ENCODE measurements at regions of chr16 and their contacts with region 1.

Region 1: DNA sequence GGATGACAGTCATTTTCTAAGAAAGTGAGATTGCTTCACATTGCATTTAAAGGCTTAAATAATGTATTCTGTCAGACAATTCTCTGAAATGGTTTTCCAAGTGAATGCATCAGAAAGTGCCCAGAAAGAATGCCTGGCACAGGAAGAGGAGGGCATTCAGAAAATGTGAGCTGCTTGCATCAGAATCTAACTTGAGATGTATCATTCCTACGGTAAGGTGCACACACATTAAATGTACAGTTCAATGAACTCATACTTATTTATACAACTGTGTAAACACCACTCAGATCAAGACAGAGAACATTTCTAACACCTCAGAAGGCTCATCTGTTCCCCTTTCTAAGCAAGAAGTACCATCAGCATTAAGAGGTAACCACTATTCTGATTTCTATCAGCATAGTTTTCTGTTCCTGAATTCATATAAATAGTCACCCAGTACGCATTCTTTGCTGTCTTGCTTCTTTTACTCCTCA is 638.0 kb downstream of the MAF start:
- DNase-seq: peak; percentile 63
- ATAC-seq: peak; percentile 67
- H3K4me3 ChIP-seq: peak overlapping the region in 1 of 5 experiments; percentile 11
- H3K4me3 Mint-ChIP-seq: peak overlapping the region; percentile 50
- H3K27ac ChIP-seq: peak overlapping the region in 1 of 2 donors; percentile 45
- H3K27ac Mint-ChIP-seq: peak overlapping the region; percentile 54
- H3K4me1 ChIP-seq: peaks cover 36 to 39% of the 10 kb centered on the region in 2 donors
- H3K4me1 Mint-ChIP-seq: peaks cover 46% of the 10 kb centered on the region
- H3K27me3 ChIP-seq: peaks cover 0 to 25% (median under 1%) of the 10 kb centered on the region in 4 experiments
- H3K27me3 Mint-ChIP-seq: peaks cover 9% of the 10 kb centered on the region
- CTCF ChIP-seq: no peak

Region 2: GRCh38 chr16:77722309-77723107 is 1240.0 kb before region 1 on chr16 and contains the start of gene NUDT7:
- CTCF ChIA-PET with region 1: no interaction called
- POLR2A ChIA-PET with region 1: no interaction called
- intact Hi-C with region 1: loop called (anchors 5 kb)
- DNase-seq: peak; percentile 96
- ATAC-seq: peak; percentile 97
- H3K4me3 ChIP-seq: peak within 1 kb of the TSS; percentile 49 to 90 (median 87)
- H3K4me3 Mint-ChIP-seq: peak within 1 kb of the TSS; percentile 85
- H3K27ac ChIP-seq: peak within 1 kb of the TSS; percentile 52 to 66
- H3K27ac Mint-ChIP-seq: peak within 1 kb of the TSS; percentile 77
- H3K4me1 ChIP-seq: peaks cover 10 to 15% of the 10 kb centered on the region in 2 donors
- H3K4me1 Mint-ChIP-seq: peaks cover 10% of the 10 kb centered on the region
- H3K27me3 ChIP-seq: no peaks in the 10 kb centered on the region
- H3K27me3 Mint-ChIP-seq: no peaks in the 10 kb centered on the region
- CTCF ChIP-seq: no peak
- total RNA-seq, gene NUDT7: 4.6 and 8.4 TPM in 2 replicates

Region 3: DNA sequence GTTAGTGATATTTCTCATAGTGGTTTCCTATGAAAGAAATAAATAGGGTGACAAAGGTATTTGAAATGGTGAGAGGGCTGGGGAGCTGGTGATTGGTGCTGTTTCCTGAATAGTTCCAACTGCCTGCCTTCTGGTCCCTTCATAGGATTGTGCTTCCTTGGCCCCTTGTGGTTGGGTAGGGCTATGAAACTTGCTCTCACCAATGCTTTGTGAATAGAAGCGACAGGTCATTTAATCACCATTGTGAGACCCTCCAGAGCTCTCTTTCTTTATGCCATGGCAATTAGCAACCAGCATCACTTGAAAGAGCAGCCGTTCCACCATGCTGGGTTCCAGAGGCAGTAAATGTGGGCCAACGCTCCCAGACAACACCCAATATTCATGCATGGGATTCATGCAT is 886.7 kb before region 1 on chr16:
- CTCF ChIA-PET with region 1: no interaction called
- POLR2A ChIA-PET with region 1: no interaction called
- intact Hi-C with region 1: no loop called
- DNase-seq: no peak
- ATAC-seq: no peak
- H3K4me3 ChIP-seq: no peak overlapping the region
- H3K4me3 Mint-ChIP-seq: no peak overlapping the region
- H3K27ac ChIP-seq: no peak overlapping the region
- H3K27ac Mint-ChIP-seq: no peak overlapping the region
- H3K4me1 ChIP-seq: no peaks in the 10 kb centered on the region
- H3K4me1 Mint-ChIP-seq: no peaks in the 10 kb centered on the region
- H3K27me3 ChIP-seq: peaks cover 0 to 5% (median 0%) of the 10 kb centered on the region in 4 experiments
- H3K27me3 Mint-ChIP-seq: peaks cover 37% of the 10 kb centered on the region
- CTCF ChIP-seq: no peak

Region 4: DNA sequence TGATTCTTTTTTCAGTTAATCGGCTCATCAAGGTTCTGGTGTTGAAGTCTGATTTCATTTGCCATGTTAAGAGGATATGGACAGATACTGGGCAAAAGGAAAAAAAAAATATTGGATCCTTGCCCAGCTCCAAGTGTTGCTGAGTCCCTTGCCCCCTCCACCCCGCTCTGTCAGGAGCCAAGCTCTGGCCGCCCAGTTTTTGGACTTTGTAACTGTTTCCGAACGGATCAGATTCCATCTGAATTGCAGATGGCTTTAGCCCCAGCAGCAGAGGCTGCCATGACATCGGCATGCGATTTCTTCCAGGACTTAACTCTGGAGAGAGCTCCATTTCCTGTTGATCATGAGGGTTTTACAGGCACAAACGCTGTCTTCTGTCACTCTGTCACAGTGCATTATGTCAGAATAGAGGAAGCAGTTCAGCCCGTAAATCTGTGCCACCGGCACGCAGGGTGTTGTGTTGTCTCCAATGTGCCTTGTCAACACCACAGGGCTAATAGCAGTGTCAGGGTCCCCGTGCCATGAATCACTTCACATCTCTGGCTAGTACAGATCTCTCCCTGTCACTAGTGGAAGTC is 22.5 kb after region 1 on chr16:
- CTCF ChIA-PET with region 1: interaction called, 3 read pairs
- POLR2A ChIA-PET with region 1: interaction called, 6 read pairs
- intact Hi-C with region 1: loop called (anchors 1 kb)
- DNase-seq: no peak
- ATAC-seq: no peak
- H3K4me3 ChIP-seq: no peak overlapping the region
- H3K4me3 Mint-ChIP-seq: no peak overlapping the region
- H3K27ac ChIP-seq: no peak overlapping the region
- H3K27ac Mint-ChIP-seq: no peak overlapping the region
- H3K4me1 ChIP-seq: peaks cover 8% of the 10 kb centered on the region in 2 donors
- H3K4me1 Mint-ChIP-seq: peaks cover 12% of the 10 kb centered on the region
- H3K27me3 ChIP-seq: peaks cover 0 to 4% (median 0%) of the 10 kb centered on the region in 4 experiments
- H3K27me3 Mint-ChIP-seq: no peaks in the 10 kb centered on the region
- CTCF ChIP-seq: no peak

Region 5: GRCh38 chr16:79012731-79013434 is 50.4 kb after region 1 on chr16:
- CTCF ChIA-PET with region 1: interaction called, 3 read pairs
- POLR2A ChIA-PET with region 1: no interaction called
- intact Hi-C with region 1: loop called (anchors 10 kb)
- DNase-seq: peak; percentile 51
- ATAC-seq: peak; percentile 88
- H3K4me3 ChIP-seq: peak overlapping the region in 1 of 5 experiments; percentile 17
- H3K4me3 Mint-ChIP-seq: peak overlapping the region; percentile 64
- H3K27ac ChIP-seq: no peak overlapping the region
- H3K27ac Mint-ChIP-seq: peak overlapping the region; percentile 50
- H3K4me1 ChIP-seq: peaks cover 18 to 23% of the 10 kb centered on the region in 2 donors
- H3K4me1 Mint-ChIP-seq: peaks cover 24% of the 10 kb centered on the region
- H3K27me3 ChIP-seq: peaks cover 0 to 2% (median 0%) of the 10 kb centered on the region in 4 experiments
- H3K27me3 Mint-ChIP-seq: peaks cover 11% of the 10 kb centered on the region
- CTCF ChIP-seq: no peak

Region 6: DNA sequence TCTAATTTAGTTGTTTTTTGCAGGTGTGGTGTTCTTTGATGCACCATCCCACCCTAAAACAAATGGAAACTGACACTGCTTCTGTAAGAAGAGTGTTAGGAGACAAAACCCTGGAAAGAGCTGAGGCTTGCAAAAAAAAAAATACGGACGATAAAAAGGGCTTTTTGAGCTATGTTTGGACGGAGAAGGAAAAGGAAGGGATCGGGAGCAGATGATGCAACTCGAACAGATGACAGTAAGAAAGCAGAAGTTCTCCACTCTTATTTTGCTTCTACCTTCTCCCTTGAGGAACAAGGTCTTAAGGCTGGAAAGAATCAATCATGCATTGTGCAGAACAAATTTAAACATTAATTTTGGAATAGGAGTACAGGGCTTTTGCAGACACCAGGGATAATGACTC is 501.3 kb after region 1 on chr16:
- CTCF ChIA-PET with region 1: no interaction called
- POLR2A ChIA-PET with region 1: no interaction called
- intact Hi-C with region 1: no loop called
- DNase-seq: no peak
- ATAC-seq: no peak
- H3K4me3 ChIP-seq: no peak overlapping the region
- H3K4me3 Mint-ChIP-seq: no peak overlapping the region
- H3K27ac ChIP-seq: no peak overlapping the region
- H3K27ac Mint-ChIP-seq: no peak overlapping the region
- H3K4me1 ChIP-seq: no peaks in the 10 kb centered on the region
- H3K4me1 Mint-ChIP-seq: no peaks in the 10 kb centered on the region
- H3K27me3 ChIP-seq: no peaks in the 10 kb centered on the region
- H3K27me3 Mint-ChIP-seq: peaks cover 13% of the 10 kb centered on the region
- CTCF ChIP-seq: no peak

Measured in B cell (primary cell).